Heart right ventricle (tissue), 16 donors: ENCODE measurements at regions of chr17 and their contacts with region 1.

Region 1: GRCh38 chr17:7081341-7082062 is 1.5 kb upstream of the CLEC10A start:
- DNase-seq: no peak
- ATAC-seq: no peak
- H3K4me3 ChIP-seq: no peak overlapping the region
- H3K27ac ChIP-seq: no peak overlapping the region
- H3K4me1 ChIP-seq: peaks cover 0 to 42% (median 0%) of the 10 kb centered on the region in 9 donors
- H3K27me3 ChIP-seq: peaks cover 0 to 8% (median 0%) of the 10 kb centered on the region in 7 donors
- CTCF ChIP-seq: no peak

Region 2: DNA sequence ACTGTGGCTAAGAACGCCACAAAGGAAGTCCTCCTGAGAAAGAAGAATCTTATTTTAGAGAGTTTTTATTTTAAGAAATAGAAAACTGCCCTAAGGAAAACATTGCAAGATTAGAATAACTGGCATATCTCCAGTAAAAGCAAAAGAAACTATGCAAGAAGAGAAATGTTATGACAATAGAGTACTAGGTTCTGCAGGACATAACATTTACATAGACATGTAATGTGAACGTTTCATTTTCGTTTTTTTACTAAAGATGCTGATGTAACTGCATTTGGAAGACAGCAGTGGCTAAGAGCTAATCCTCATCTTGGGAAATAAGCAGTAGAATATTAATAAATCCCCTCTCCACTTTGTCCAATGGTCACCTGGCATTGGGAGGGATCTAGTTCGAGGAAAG is 40.9 kb after region 1 on chr17:
- intact Hi-C with region 1: loop called in 1 of 10 experiments (anchors 5 kb)
- DNase-seq: no peak
- ATAC-seq: no peak
- H3K4me3 ChIP-seq: no peak overlapping the region
- H3K27ac ChIP-seq: peak overlapping the region in 1 of 10 donors; percentile 87
- H3K4me1 ChIP-seq: peaks cover 0 to 50% (median 0%) of the 10 kb centered on the region in 9 donors
- H3K27me3 ChIP-seq: peaks cover 0 to 35% (median 24%) of the 10 kb centered on the region in 7 donors
- CTCF ChIP-seq: no peak

Region 3: DNA sequence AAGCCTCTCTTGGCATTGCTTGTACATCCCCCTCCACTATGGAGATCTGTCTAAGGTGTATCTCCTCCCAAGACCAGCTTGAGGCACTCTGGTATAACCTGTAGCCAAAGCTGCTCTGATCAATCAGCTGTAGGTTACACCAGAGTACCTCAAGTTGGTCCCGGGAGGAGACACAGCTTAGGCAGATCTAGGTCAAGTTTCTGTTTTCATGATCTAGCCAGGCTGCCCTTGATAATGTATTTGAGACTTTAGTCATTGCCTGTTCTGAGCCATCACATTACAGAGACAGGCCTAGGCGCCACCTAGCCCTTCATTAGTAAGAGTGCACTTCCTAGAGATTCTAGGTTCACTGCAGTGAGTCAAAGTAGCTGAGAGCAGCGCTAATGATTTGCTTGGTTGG is 66.3 kb after region 1 on chr17:
- intact Hi-C with region 1: loop called in 1 of 10 experiments (anchors 2 kb)
- DNase-seq: no peak
- ATAC-seq: no peak
- H3K4me3 ChIP-seq: no peak overlapping the region
- H3K27ac ChIP-seq: no peak overlapping the region
- H3K4me1 ChIP-seq: no peaks in the 10 kb centered on the region
- H3K27me3 ChIP-seq: peaks cover 0 to 29% (median 17%) of the 10 kb centered on the region in 7 donors
- CTCF ChIP-seq: no peak

Region 4: GRCh38 chr17:7296189-7296902 is 214.8 kb after region 1 on chr17:
- intact Hi-C with region 1: no loop called
- DNase-seq: peak; percentile 81 to 88
- ATAC-seq: peak; percentile 71 to 93 (median 78)
- H3K4me3 ChIP-seq: peak overlapping the region in 7 of 10 donors; percentile 7 to 32 (median 14)
- H3K27ac ChIP-seq: peak overlapping the region; percentile 35 to 85 (median 80)
- H3K4me1 ChIP-seq: peaks cover 18 to 53% (median 49%) of the 10 kb centered on the region in 9 donors
- H3K27me3 ChIP-seq: peaks cover 0 to 57% (median 34%) of the 10 kb centered on the region in 7 donors
- CTCF ChIP-seq: peak; percentile 91 to 99 (median 96)